PC-3 (cell line): ENCODE measurements at regions of chr13 and their contacts with region 1.

Region 1: DNA sequence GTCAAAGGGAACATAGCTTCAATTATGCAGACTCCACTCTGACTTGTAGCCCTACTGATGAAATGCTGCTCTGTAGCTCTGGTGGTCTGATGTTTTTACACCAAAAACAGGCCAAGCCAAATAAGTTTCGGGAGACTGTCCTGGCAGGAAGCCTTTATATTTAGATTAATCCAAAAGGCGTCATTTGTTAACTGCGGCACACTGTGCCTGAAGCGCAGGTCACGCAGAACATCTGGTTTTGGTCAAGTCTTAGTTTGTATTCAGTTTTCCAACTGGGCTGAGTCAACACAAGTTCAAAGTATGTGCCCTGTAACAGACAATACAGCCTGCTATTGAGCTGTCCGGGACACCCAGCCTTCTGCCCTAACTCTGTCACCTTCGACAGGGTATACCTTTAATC is 154.6 kb upstream of the IPO5 start:
- DNase-seq: no peak
- ATAC-seq: no peak
- H3K4me3 ChIP-seq: no peak overlapping the region
- H3K27ac ChIP-seq: no peak overlapping the region
- H3K4me1 ChIP-seq: no peaks in the 10 kb centered on the region
- H3K27me3 ChIP-seq: no peaks in the 10 kb centered on the region
- CTCF ChIP-seq: no peak

Region 2: GRCh38 chr13:97235549-97236231 is 563.1 kb before region 1 on chr13:
- CTCF ChIA-PET with region 1: no interaction called
- POLR2A ChIA-PET with region 1: interaction called, 20 read pairs
- intact Hi-C with region 1: no loop called
- DNase-seq: no peak
- ATAC-seq: no peak
- H3K4me3 ChIP-seq: no peak overlapping the region
- H3K27ac ChIP-seq: no peak overlapping the region
- H3K4me1 ChIP-seq: no peaks in the 10 kb centered on the region
- H3K27me3 ChIP-seq: no peaks in the 10 kb centered on the region
- CTCF ChIP-seq: no peak

Region 3: DNA sequence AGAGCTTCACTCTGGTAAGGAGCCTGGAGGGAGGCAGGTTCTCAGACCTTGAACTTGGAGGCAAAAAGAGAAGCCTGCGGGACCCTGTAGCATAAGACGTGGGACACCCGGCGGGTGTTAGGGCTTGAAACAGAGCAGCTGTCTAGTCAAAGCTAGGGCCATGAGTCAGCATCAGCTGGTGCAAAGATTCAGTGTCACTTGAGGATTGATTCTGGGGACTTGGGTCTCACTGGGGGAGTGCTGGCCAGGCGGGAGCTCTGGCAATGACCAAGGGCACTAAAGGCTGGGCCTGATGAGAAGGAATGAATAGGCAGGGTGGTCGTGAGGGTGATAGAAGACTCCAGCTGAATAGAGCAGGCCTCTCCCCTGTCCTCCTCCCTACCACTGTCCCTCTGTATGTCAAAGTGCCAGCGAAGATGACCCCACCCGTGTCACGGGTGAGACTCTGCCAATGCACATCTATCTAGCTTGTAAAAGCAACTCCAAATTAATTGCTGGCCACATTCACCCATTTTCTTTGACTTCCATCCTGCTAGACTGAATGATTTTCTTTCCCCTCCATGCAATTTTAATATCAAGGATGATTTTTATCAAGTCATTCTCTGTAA is 479.6 kb before region 1 on chr13:
- CTCF ChIA-PET with region 1: no interaction called
- POLR2A ChIA-PET with region 1: no interaction called
- intact Hi-C with region 1: no loop called
- DNase-seq: no peak
- ATAC-seq: no peak
- H3K4me3 ChIP-seq: no peak overlapping the region
- H3K27ac ChIP-seq: no peak overlapping the region
- H3K4me1 ChIP-seq: no peaks in the 10 kb centered on the region
- H3K27me3 ChIP-seq: no peaks in the 10 kb centered on the region
- CTCF ChIP-seq: no peak

Region 4: DNA sequence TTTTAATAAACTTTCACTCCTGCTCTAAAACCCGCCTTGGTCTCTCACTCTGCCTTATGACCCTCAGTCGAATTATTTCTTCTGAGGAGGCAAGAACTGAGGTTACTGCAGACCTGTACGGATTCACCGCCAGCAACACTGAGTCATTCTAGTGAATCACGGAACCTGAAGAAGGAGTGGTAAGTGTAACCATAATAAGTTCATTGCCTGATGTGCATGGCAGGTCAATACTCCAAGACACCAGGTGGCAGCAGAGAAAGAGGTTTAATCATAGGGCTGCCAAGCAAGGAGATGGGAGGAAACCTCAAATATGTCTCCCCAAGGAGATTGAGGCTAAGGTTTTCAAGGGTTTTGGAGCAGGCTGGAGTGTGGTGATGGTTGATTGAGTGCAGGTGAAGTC is 49.7 kb before region 1 on chr13:
- CTCF ChIA-PET with region 1: no interaction called
- POLR2A ChIA-PET with region 1: no interaction called
- intact Hi-C with region 1: loop called (anchors 1 kb)
- DNase-seq: peak; percentile 85
- ATAC-seq: peak; percentile 98
- H3K4me3 ChIP-seq: no peak overlapping the region
- H3K27ac ChIP-seq: no peak overlapping the region
- H3K4me1 ChIP-seq: no peaks in the 10 kb centered on the region
- H3K27me3 ChIP-seq: no peaks in the 10 kb centered on the region
- CTCF ChIP-seq: peak; percentile 66